A549 (cell line): ENCODE measurements at regions of chr19 and their contacts with region 1.

Region 1: DNA sequence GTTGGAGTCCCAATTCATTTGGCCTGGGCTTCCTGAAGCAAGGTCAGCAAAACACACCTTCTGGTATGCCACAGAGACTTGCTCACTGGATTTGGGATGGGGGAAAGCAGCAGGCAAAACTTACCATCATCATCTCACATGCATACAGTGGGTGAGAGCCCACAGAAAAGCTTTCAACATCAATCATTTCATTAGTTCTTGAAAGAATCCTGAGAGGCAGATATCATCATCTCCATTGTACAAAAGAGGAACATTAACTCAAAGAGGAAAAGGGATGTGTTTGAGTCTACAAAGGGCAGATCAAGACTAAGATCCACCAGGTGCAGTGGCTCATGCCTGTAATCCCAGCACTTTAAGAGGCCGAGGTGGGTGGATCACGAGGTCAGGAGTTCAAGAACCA is 6.4 kb downstream of the WDR87 start:
- DNase-seq: no peak
- ATAC-seq: no peak
- H3K4me3 ChIP-seq: no peak overlapping the region
- H3K27ac ChIP-seq: no peak overlapping the region
- H3K4me1 ChIP-seq: no peaks in the 10 kb centered on the region
- CTCF ChIP-seq: no peak
- EP300 ChIP-seq: no peak
- POLR2A ChIP-seq: no peak
- RAD21 ChIP-seq: no peak

Region 2: GRCh38 chr19:37864501-37864900 is 35.5 kb before region 1 on chr19:
- CTCF ChIA-PET with region 1: no interaction called
- POLR2A ChIA-PET with region 1: no interaction called
- DNase-seq: no peak
- ATAC-seq: no peak
- H3K4me3 ChIP-seq: no peak overlapping the region
- H3K27ac ChIP-seq: no peak overlapping the region
- H3K4me1 ChIP-seq: no peaks in the 10 kb centered on the region
- CTCF ChIP-seq: no peak
- EP300 ChIP-seq: no peak
- POLR2A ChIP-seq: no peak
- RAD21 ChIP-seq: no peak

Region 3: DNA sequence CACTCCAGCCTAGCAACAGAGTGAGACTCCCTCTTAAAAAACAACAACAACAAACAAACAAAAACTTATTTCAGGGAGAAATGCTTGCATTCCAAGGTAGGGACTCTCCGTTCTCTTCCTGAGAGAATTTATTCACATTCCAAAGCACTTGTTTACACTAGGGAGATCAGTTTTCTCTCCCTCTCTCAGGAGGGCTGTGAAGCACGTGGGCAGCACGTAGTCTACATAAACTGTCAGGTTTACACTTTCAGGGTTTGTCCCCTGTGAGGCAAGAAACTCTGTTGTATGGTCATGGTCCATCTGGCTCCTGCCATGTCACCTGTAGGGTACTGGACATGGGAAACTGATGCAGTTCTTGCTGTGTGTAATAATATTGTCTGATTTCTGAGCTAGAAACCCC is 25.2 kb before region 1 on chr19:
- CTCF ChIA-PET with region 1: interaction called, 23 read pairs
- POLR2A ChIA-PET with region 1: no interaction called
- DNase-seq: no peak
- ATAC-seq: peak in 1 of 2 experiments; percentile 54; a peak in 3 of 6 replicates
- H3K4me3 ChIP-seq: no peak overlapping the region
- H3K27ac ChIP-seq: no peak overlapping the region
- H3K4me1 ChIP-seq: no peaks in the 10 kb centered on the region
- CTCF ChIP-seq: no peak
- EP300 ChIP-seq: no peak
- POLR2A ChIP-seq: no peak
- RAD21 ChIP-seq: no peak

Region 4: GRCh38 chr19:38022791-38023670 is 123.1 kb after region 1 on chr19:
- CTCF ChIA-PET with region 1: interaction called, 316 read pairs
- POLR2A ChIA-PET with region 1: no interaction called
- DNase-seq: no peak
- ATAC-seq: no peak
- H3K4me3 ChIP-seq: no peak overlapping the region
- H3K27ac ChIP-seq: peak overlapping the region in 1 of 2 experiments; percentile 21; a peak in 2 of 6 replicates
- H3K4me1 ChIP-seq: peaks cover 12% of the 10 kb centered on the region; the same call in 2 of the 3 replicates
- CTCF ChIP-seq: no peak
- EP300 ChIP-seq: no peak
- POLR2A ChIP-seq: no peak
- RAD21 ChIP-seq: no peak

Region 5: DNA sequence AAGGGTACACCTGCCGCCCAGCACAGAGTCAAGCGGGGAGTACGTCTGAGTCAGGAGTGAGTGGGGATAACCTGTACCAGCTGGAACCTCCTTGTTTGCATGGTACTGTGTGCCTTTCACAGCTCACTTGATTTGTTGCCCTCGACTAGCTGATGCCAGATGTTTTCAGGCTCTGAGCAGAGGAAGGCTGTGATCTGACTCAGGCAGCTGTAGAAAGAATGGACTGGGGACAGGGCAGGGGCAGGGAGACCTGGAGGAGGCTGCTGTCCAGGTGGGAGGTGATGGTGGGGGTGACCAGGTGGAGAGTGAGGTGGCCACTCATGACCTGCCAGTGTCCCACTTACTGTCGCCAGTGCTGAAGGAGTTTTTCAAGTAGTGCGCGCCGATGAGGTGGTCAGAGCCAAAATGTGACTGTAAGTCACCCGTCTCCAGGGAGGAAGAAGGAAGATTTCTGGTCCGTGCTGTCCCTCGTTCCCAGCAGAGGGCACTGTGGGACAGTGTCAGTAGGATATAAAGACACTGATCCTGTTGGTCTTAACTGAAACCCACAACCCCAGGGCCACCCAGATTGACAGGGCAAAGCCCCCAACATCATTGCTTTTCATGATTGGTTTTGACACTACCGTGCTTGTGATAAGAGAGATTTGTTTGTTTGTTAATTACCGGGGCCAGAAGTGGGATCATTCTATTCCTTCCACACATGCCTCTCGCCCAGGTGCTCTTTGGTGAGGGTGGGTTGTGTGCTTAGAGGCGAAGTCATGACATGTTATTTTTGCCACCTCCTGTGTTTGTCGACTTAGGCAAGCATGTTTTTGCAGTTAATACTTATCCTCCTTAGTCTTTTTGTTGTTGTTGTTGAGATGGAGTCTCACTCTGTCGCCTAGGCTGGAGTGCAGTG is 195.7 kb after region 1 on chr19:
- CTCF ChIA-PET with region 1: interaction called, 408 read pairs
- POLR2A ChIA-PET with region 1: no interaction called
- DNase-seq: peak; percentile 86 to 87
- ATAC-seq: peak; percentile 87 to 89
- H3K4me3 ChIP-seq: no peak overlapping the region
- H3K27ac ChIP-seq: peak overlapping the region in 1 of 2 experiments; percentile 35; a peak in 1 of 6 replicates
- H3K4me1 ChIP-seq: no peaks in the 10 kb centered on the region
- CTCF ChIP-seq: peak; percentile 97
- EP300 ChIP-seq: no peak
- POLR2A ChIP-seq: peak; percentile 8; the same call in 1 of the 2 replicates
- RAD21 ChIP-seq: peak; percentile 82 to 83

Region 6: DNA sequence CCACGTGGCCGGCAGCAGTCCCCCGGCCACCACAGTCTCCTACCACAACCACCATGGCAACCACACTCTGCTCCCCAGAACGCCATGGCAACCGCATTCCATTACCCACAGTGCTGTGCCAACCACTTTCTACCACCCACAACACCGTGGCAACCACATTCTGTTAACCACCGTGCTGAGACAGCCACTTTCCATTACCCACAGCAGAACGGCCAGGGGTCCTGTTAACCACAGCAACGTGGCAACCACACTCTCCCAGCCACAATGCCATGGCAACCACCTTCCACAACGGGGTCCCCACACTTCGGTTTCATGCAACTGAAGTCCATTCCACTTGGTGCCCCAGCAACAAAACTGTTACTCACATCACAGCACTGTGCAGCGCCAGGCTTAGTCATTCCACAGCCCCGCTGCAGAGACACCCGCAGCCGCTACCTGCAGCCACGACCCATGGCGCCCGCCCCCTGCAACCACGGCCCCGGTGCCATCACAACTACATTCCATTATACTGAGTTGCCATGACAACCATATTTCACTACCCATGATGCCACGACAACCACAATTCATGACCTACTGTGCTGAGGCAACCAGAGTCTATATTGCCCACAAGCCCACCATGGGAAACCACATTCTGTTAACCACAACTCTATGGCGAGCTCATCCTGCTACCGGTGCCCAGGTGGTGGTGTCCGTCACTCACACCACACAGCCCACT is 314.1 kb after region 1 on chr19:
- CTCF ChIA-PET with region 1: interaction called, 23 read pairs
- POLR2A ChIA-PET with region 1: no interaction called
- DNase-seq: peak in 1 of 2 experiments; percentile 81
- ATAC-seq: peak; percentile 37 to 46
- H3K4me3 ChIP-seq: no peak overlapping the region
- H3K27ac ChIP-seq: no peak overlapping the region
- H3K4me1 ChIP-seq: peaks cover 24% of the 10 kb centered on the region; the same call in 2 of the 3 replicates
- CTCF ChIP-seq: no peak
- EP300 ChIP-seq: no peak
- POLR2A ChIP-seq: no peak
- RAD21 ChIP-seq: no peak

Region 7: GRCh38 chr19:38250821-38251563 is 351.0 kb after region 1 on chr19:
- CTCF ChIA-PET with region 1: interaction called, 38 read pairs
- POLR2A ChIA-PET with region 1: interaction called, 3 read pairs
- DNase-seq: no peak
- ATAC-seq: no peak
- H3K4me3 ChIP-seq: no peak overlapping the region
- H3K27ac ChIP-seq: peak overlapping the region in 1 of 2 experiments; percentile 39; a peak in 3 of 6 replicates
- H3K4me1 ChIP-seq: peaks cover 34% of the 10 kb centered on the region
- CTCF ChIP-seq: no peak
- EP300 ChIP-seq: no peak
- POLR2A ChIP-seq: no peak
- RAD21 ChIP-seq: no peak